ENCODE measurements at regions of chr17 and their contacts with region 1.

Region 1: DNA sequence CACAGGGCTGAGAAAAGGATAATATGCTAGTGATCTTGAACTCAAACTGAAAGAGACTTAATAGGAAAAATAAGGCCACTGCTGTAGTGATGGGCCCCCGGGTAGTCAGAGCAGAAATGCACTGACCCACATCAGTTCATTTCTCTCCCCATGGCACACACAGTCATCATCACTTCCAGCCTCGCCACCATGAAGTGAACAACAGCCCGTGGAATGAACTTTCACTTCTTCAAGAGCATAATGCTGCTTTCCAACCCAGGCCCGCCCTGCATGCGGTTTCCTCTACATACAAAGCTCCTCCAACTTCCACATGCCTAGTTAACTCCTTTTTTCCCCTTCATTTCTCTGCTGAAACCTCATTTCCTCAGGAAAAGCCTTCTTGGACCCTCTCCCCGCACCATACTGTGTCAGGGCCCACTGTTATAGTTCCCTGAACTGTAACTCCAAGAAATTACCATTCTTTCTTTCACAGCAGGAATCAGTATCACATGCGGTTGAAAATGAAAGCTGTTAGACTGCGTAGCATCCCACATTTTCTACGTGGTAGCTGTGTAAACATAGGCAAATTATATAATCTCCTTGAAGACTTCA is 65.8 kb upstream of the SMIM36 start:
- DNase-seq: peak; percentile 47 to 85 (median 68)
- ATAC-seq: peak; percentile 82 to 84
- H3K4me3 ChIP-seq: peak overlapping the region; percentile 27
- H3K27ac ChIP-seq: peak overlapping the region; percentile 89
- H3K4me1 ChIP-seq: no peaks in the 10 kb centered on the region
- H3K27me3 ChIP-seq: no peaks in the 10 kb centered on the region

Region 2: DNA sequence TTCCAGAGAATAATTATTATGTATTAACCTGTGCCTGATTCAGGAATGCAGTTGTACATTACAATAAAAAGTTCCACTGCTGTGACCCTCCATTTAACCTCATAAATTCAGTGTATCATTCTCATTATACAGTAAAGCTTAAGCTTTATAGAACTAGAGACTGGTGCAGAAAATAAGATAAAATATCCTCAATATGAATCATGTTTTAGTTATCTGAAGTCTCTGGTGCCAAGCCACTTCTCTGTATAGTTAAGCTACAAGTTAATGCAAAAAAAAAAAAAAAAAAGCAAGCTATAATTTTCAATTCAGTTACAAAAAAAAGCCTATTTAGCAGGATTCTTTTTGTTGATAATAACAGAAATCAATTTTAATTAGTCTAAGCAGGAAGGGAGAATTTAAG is 43.5 kb before region 1 on chr17:
- intact Hi-C with region 1: loop called in 1 of 4 experiments (anchors 10 kb)
- DNase-seq: no peak
- ATAC-seq: no peak
- H3K4me3 ChIP-seq: no peak overlapping the region
- H3K27ac ChIP-seq: no peak overlapping the region
- H3K4me1 ChIP-seq: no peaks in the 10 kb centered on the region
- H3K27me3 ChIP-seq: no peaks in the 10 kb centered on the region

Region 3: GRCh38 chr17:55635253-55635914 is 58.3 kb after region 1 on chr17:
- intact Hi-C with region 1: loop called in 2 of 4 experiments (anchors 10 kb)
- DNase-seq: peak in 2 of 3 donors; percentile 20 to 41
- ATAC-seq: peak; percentile 71 to 95
- H3K4me3 ChIP-seq: no peak overlapping the region
- H3K27ac ChIP-seq: no peak overlapping the region
- H3K4me1 ChIP-seq: peaks cover 5% of the 10 kb centered on the region
- H3K27me3 ChIP-seq: no peaks in the 10 kb centered on the region

Region 4: DNA sequence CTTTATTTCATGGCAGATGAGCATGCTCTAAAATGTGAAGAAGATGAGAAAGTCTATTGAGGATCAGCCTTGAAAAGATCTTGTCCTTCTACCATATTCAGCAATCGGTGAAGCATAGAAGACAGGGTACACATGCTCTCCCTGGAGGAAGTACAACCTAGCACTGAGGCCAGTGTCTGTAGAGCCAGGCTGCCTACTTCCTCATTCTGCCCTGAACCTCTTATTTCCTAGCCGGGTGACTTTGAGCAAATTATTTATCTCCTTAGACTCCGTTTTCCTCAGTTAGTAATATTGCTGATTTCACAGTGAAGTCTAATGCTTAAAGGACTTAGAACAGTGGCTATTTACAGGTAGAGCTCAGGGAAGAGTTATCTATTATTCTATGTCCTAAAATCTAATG is 87.2 kb after region 1 on chr17:
- intact Hi-C with region 1: no loop called
- DNase-seq: no peak
- ATAC-seq: no peak
- H3K4me3 ChIP-seq: no peak overlapping the region
- H3K27ac ChIP-seq: no peak overlapping the region
- H3K4me1 ChIP-seq: peaks cover 3% of the 10 kb centered on the region
- H3K27me3 ChIP-seq: no peaks in the 10 kb centered on the region

Measured in right cardiac atrium (tissue), 5 donors.